A673 (cell line): ENCODE measurements at regions of chr5 and their contacts with region 1.

Region 1: DNA sequence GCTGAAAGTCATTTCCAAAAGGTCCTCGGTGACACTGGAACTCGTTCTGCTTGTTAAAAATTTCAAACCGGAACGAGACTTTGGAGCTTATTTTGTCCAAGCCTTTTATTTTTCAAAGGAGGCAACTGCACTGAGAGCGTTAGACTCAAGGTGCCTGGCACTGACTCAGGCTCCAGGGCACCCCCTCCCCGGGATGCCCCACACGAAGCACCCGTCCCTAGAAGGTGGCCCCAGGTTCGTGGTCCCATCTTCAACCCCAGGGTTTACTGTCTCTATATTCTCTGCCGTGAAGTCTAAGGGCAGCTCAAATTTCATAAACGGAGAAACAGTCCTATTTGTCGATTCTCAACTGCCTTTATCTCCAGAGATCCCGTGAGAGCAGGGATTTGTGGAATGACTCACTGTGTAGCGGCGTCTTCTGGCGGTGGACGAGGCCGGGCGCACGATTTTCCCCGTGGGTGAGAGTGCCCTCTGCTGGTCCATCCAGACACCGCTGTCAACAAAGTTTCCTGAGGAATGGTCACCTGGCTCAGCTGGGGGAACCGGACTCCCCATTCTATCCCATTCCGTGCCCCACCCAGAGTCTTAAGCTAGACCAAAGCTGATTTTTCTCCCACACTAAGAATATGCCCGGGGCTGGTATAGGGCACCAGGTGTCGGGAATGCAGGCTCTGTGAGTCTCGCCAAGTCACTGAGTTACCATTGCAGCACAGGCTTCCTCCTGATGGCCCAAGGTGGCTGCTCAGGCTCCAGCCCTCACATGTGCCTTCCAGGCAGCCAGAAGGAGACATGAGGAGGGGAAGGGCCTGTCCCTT is 27.1 kb upstream of the SLC6A19 start:
- DNase-seq: peak; percentile 95
- H3K4me3 ChIP-seq: no peak overlapping the region
- H3K27ac ChIP-seq: no peak overlapping the region
- H3K4me1 ChIP-seq: peaks cover 5% of the 10 kb centered on the region
- H3K27me3 ChIP-seq: no peaks in the 10 kb centered on the region
- CTCF ChIP-seq: peak; percentile 93

Region 2: GRCh38 chr5:923281-923873 is 251.0 kb before region 1 on chr5:
- CTCF ChIA-PET with region 1: interaction called, 18 read pairs
- POLR2A ChIA-PET with region 1: no interaction called
- intact Hi-C with region 1: no loop called
- DNase-seq: peak; percentile 76
- H3K4me3 ChIP-seq: no peak overlapping the region
- H3K27ac ChIP-seq: no peak overlapping the region
- H3K4me1 ChIP-seq: no peaks in the 10 kb centered on the region
- H3K27me3 ChIP-seq: peaks cover 2% of the 10 kb centered on the region
- CTCF ChIP-seq: peak; percentile 92

Region 3: DNA sequence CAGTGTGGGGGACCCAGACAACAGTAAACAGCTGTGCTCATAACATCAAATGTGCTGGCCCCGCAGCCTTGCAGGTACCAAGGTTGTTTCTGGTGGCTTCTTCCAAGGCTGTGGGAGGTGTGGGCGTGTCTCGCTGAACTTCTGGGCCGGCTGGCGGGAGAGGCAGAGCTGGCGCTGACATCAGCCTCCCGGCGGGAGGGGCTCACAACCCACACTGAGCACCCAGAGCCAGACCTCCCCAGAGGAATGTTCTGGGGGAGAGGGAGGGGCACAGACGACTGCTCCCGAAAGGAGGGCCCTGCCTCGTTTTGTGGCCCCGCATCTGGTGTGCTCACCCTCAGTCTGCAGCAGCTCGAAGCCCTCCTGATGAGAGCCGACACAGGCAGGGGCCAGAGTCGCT is 55.6 kb before region 1 on chr5:
- CTCF ChIA-PET with region 1: interaction called, 14 read pairs
- POLR2A ChIA-PET with region 1: no interaction called
- intact Hi-C with region 1: no loop called
- DNase-seq: peak; percentile 64
- H3K4me3 ChIP-seq: no peak overlapping the region
- H3K27ac ChIP-seq: no peak overlapping the region
- H3K4me1 ChIP-seq: peaks cover 26% of the 10 kb centered on the region
- H3K27me3 ChIP-seq: no peaks in the 10 kb centered on the region
- CTCF ChIP-seq: no peak